Transverse colon (tissue), 4 donors: ENCODE measurements at regions of chr3 and their contacts with region 1.

Region 1: DNA sequence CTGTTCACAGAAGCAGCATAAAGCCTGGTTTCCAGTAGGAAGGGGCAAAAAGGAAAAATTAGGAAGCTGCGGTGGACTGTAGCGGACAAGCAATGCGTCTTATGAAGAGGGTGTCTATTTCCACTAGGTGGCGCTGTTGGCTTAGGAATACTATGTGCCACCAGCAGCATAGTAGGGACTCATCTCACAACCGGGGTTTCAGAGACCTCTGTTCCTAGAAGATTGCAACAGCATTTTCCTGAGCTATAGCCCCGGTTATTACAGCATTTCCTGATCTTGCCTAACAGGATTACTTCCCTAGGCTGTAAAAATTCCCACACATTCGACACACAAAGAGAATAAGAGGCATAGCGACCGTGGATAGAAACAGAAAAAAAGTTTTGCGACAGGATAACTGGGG is 683.0 kb downstream of the TBL1XR1 start:
- DNase-seq: no peak
- H3K4me3 ChIP-seq: no peak overlapping the region
- H3K27ac ChIP-seq: no peak overlapping the region
- H3K4me1 ChIP-seq: no peaks in the 10 kb centered on the region
- H3K27me3 ChIP-seq: no peaks in the 10 kb centered on the region
- CTCF ChIP-seq: peak; percentile 38 to 55 (median 47)
- EP300 ChIP-seq: no peak
- POLR2A ChIP-seq: no peak

Region 2: GRCh38 chr3:176663837-176664831 is 149.8 kb after region 1 on chr3:
- in situ Hi-C with region 1: no loop called
- intact Hi-C with region 1: loop called (anchors 5 kb)
- DNase-seq: no peak
- H3K4me3 ChIP-seq: no peak overlapping the region
- H3K27ac ChIP-seq: no peak overlapping the region
- H3K4me1 ChIP-seq: no peaks in the 10 kb centered on the region
- H3K27me3 ChIP-seq: no peaks in the 10 kb centered on the region
- CTCF ChIP-seq: no peak
- EP300 ChIP-seq: no peak
- POLR2A ChIP-seq: no peak

Region 3: GRCh38 chr3:176939022-176939817 is 424.9 kb after region 1 on chr3:
- in situ Hi-C with region 1: loop called in 2 of 4 experiments (anchors 25 kb)
- intact Hi-C with region 1: loop called (anchors 2 kb)
- DNase-seq: peak; percentile 10
- H3K4me3 ChIP-seq: no peak overlapping the region
- H3K27ac ChIP-seq: no peak overlapping the region
- H3K4me1 ChIP-seq: no peaks in the 10 kb centered on the region
- H3K27me3 ChIP-seq: no peaks in the 10 kb centered on the region
- CTCF ChIP-seq: peak; percentile 66 to 79 (median 75)
- EP300 ChIP-seq: no peak
- POLR2A ChIP-seq: no peak